ENCODE measurements at regions of chrX and their contacts with region 1.

Region 1: DNA sequence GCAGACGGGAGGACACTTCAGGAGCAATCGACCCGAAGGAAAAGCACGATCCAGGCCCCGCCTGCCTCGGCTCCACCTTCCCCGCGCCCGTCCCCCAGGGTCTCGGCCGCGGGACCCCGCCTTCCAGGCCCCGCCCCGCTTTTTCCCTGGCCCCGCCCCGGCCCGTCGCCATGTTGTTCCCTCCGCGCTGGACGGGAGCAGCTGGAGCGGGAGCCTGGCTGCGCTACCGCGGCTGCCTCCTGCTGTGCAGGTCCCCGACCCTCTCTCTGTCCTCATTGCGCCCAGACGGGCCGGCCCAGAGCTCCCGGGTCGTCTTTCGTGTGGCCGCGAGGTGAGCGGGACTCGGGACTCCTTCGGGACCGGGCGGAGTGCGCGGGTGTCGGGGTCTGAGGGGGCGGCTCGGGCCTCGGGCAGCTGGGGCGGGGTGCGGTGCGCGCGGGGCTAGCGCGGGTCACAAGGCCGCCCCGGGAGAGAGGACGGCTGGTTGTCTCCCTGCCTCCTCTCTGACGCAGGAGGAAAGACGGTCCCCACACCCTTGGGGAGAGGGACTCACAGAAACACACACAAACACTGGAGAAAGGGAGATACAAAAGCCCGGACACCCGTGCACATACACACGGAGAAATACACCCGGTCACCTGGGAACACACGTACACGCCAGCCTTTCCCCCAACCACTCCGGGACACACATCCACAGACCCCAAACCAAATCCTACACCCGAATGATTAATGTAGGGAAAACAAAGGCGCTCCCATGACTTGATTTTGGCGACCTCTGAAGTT is at the start of gene RAB9A:
- DNase-seq: no peak
- ATAC-seq: peak; percentile 77
- H3K4me3 ChIP-seq: peak within 1 kb of the TSS; percentile 84
- H3K27ac ChIP-seq: peak within 1 kb of the TSS; percentile 91
- H3K4me1 ChIP-seq: peaks cover 16% of the 10 kb centered on the region
- H3K27me3 ChIP-seq: no peaks in the 10 kb centered on the region
- CTCF ChIP-seq: no peak
- EP300 ChIP-seq: peak in 1 of 2 experiments; percentile 18; a peak in 1 of 4 replicates
- POLR2A ChIP-seq: peak; percentile 86
- RAD21 ChIP-seq: no peak
- polyA plus RNA-seq, gene RAB9A: 49.2 to 49.3 TPM

Region 2: GRCh38 chrX:13658602-13659001 is 30.5 kb before region 1 on chrX:
- CTCF ChIA-PET with region 1: interaction called, 23 read pairs
- POLR2A ChIA-PET with region 1: interaction called, 12 read pairs
- RAD21 ChIA-PET with region 1: interaction called, 38 read pairs
- SMC1A ChIA-PET with region 1: interaction called, 115 read pairs
- in situ Hi-C with region 1: no loop called
- intact Hi-C with region 1: loop called (anchors 1 kb)
- DNase-seq: no peak
- ATAC-seq: peak; percentile 66
- H3K4me3 ChIP-seq: no peak overlapping the region
- H3K27ac ChIP-seq: peak overlapping the region; percentile 73
- H3K4me1 ChIP-seq: peaks cover 14% of the 10 kb centered on the region
- H3K27me3 ChIP-seq: no peaks in the 10 kb centered on the region
- CTCF ChIP-seq: peak; percentile 59 to 72 (median 68)
- EP300 ChIP-seq: no peak
- POLR2A ChIP-seq: no peak
- RAD21 ChIP-seq: peak; percentile 93

Region 3: GRCh38 chrX:13676885-13677284 is 12.3 kb before region 1 on chrX:
- CTCF ChIA-PET with region 1: interaction called, 10 read pairs
- POLR2A ChIA-PET with region 1: interaction called, 49 read pairs
- RAD21 ChIA-PET with region 1: interaction called, 103 read pairs
- SMC1A ChIA-PET with region 1: interaction called, 136 read pairs
- in situ Hi-C with region 1: no loop called
- intact Hi-C with region 1: no loop called
- DNase-seq: no peak
- ATAC-seq: no peak
- H3K4me3 ChIP-seq: no peak overlapping the region
- H3K27ac ChIP-seq: no peak overlapping the region
- H3K4me1 ChIP-seq: no peaks in the 10 kb centered on the region
- H3K27me3 ChIP-seq: no peaks in the 10 kb centered on the region
- CTCF ChIP-seq: no peak
- EP300 ChIP-seq: no peak
- POLR2A ChIP-seq: no peak
- RAD21 ChIP-seq: no peak

Region 4: GRCh38 chrX:14173873-14174272 is 484.7 kb after region 1 on chrX:
- CTCF ChIA-PET with region 1: no interaction called
- POLR2A ChIA-PET with region 1: no interaction called
- RAD21 ChIA-PET with region 1: no interaction called
- SMC1A ChIA-PET with region 1: no interaction called
- in situ Hi-C with region 1: no loop called
- intact Hi-C with region 1: no loop called
- DNase-seq: no peak
- ATAC-seq: no peak
- H3K4me3 ChIP-seq: no peak overlapping the region
- H3K27ac ChIP-seq: no peak overlapping the region
- H3K4me1 ChIP-seq: no peaks in the 10 kb centered on the region
- H3K27me3 ChIP-seq: 0 out of 4 replicates have a peak, but pooled peaks cover 0 to under 1% of the 10 kb centered on the region in 2 experiments
- CTCF ChIP-seq: no peak
- EP300 ChIP-seq: no peak
- POLR2A ChIP-seq: no peak
- RAD21 ChIP-seq: no peak